ENCODE measurements at regions of chr11 and their contacts with region 1.

Region 1: DNA sequence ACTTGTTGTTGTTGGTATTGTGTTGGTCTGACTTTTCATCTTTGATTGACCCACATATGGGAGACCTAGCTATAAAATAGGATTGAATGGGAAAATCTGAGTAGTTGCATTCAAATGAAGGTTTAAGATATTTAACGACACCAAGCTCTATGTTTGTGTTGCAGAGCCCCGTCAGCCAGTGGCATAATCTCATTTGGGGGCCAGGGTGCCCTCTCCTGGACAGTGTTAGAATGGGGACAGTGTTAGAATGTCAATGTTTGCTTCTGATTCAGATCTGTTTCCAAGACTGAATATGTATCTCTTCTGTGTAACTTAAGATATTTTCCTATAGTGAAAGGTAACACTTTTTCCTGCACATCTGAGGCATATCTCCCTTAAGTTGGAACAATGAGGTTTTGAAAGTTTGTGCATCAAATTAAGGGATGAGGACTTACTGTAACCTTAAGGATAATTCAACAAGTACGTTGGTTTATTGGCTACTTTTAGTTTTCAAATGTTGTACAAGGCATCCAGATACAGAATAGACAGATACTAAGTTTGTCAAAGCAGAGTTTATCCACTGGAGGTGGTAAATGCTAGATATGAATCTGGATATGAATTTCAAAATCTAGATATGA is 5.3 kb upstream of the OR52M1 start:
- DNase-seq: peak; percentile 36
- CTCF ChIP-seq: peak; percentile 73

Region 2: GRCh38 chr11:4181782-4182721 is 357.7 kb before region 1 on chr11:
- CTCF ChIA-PET with region 1: interaction called, 169 read pairs
- POLR2A ChIA-PET with region 1: no interaction called
- DNase-seq: peak; percentile 75
- CTCF ChIP-seq: peak; percentile 84

Region 3: DNA sequence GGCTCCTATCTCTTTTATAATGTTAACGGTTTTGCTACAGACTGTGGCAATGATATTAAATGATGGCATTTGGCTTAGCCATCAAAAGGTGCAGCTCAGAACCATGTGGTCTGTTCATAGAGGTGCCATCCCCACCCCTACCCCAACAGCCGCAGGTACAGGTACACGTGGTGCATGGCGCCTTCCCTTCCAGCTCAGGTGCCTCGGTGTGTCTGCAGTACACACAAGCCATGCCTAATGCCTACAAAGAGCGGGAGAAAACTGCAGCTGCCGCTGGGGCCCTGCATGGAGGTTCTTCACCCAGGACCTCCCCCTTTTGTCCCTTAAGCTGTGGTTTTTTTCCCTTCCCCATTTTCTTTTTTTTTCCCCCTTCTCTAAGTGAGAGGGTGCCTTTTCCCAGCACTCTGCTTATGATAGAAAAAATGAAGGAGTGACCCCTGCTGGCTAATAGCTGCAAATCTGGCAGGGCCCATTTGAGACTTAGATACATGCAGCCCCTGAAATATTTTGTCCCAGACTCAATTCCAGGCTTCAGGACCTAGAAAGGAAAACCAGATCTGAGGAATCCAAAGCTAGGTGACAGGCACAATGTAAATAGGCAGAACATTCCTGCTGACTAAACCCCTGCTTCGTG is 11.8 kb after region 1 on chr11:
- CTCF ChIA-PET with region 1: interaction called, 17 read pairs
- POLR2A ChIA-PET with region 1: no interaction called
- DNase-seq: peak; percentile 25
- CTCF ChIP-seq: no peak

Region 4: GRCh38 chr11:4798427-4799183 is 258.9 kb after region 1 on chr11:
- CTCF ChIA-PET with region 1: no interaction called
- POLR2A ChIA-PET with region 1: no interaction called
- DNase-seq: no peak
- CTCF ChIP-seq: no peak